Mammary epithelial cell (primary cell): ENCODE measurements at regions of chr14 and their contacts with region 1.

Region 1: GRCh38 chr14:55889124-55889523 is 229.1 kb upstream of the PELI2 start:
- DNase-seq: peak; percentile 90
- H3K4me3 ChIP-seq: no peak overlapping the region
- H3K27ac ChIP-seq: peak overlapping the region; percentile 34
- H3K4me1 ChIP-seq: peaks cover 25% of the 10 kb centered on the region
- H3K27me3 ChIP-seq: peaks cover 2% of the 10 kb centered on the region
- CTCF ChIP-seq: no peak

Region 2: GRCh38 chr14:55707365-55707804 is 181.7 kb before region 1 on chr14:
- CTCF ChIA-PET with region 1: no interaction called
- dilution Hi-C with region 1: no loop called
- in situ Hi-C with region 1: no loop called
- intact Hi-C with region 1: no loop called
- DNase-seq: peak; percentile 47
- H3K4me3 ChIP-seq: no peak overlapping the region
- H3K27ac ChIP-seq: no peak overlapping the region
- H3K4me1 ChIP-seq: peaks cover 18% of the 10 kb centered on the region
- H3K27me3 ChIP-seq: no peaks in the 10 kb centered on the region
- CTCF ChIP-seq: peak; percentile 69 to 73

Region 3: GRCh38 chr14:55864890-55865655 is 24.1 kb before region 1 on chr14:
- CTCF ChIA-PET with region 1: no interaction called
- dilution Hi-C with region 1: no loop called
- in situ Hi-C with region 1: no loop called
- intact Hi-C with region 1: loop called (anchors 2 kb)
- DNase-seq: no peak
- H3K4me3 ChIP-seq: no peak overlapping the region
- H3K27ac ChIP-seq: no peak overlapping the region
- H3K4me1 ChIP-seq: peaks cover 10% of the 10 kb centered on the region
- H3K27me3 ChIP-seq: no peaks in the 10 kb centered on the region
- CTCF ChIP-seq: peak in 1 of 2 donors; percentile 33

Region 4: DNA sequence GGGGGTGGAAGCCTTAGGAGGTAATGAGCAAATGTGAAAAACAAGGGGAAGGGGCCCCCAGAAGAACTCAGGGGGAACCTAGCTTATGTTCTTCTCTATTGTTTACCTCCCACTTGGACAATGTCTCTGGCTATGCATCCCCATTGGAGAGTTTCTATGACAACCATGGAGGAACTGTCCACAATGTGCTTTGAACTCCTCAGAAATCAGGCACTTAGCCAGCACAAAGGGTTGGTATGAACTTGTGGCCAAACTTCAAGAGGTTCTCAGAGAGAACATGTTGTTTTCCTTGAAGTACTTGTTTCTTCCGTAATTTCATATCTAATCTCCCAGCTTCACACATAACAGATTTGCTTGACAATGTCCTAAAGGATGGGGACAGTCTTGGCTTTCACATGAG is 26.3 kb after region 1 on chr14:
- CTCF ChIA-PET with region 1: no interaction called
- dilution Hi-C with region 1: no loop called
- in situ Hi-C with region 1: no loop called
- intact Hi-C with region 1: no loop called
- DNase-seq: no peak
- H3K4me3 ChIP-seq: no peak overlapping the region
- H3K27ac ChIP-seq: no peak overlapping the region
- H3K4me1 ChIP-seq: no peaks in the 10 kb centered on the region
- H3K27me3 ChIP-seq: no peaks in the 10 kb centered on the region
- CTCF ChIP-seq: no peak

Region 5: DNA sequence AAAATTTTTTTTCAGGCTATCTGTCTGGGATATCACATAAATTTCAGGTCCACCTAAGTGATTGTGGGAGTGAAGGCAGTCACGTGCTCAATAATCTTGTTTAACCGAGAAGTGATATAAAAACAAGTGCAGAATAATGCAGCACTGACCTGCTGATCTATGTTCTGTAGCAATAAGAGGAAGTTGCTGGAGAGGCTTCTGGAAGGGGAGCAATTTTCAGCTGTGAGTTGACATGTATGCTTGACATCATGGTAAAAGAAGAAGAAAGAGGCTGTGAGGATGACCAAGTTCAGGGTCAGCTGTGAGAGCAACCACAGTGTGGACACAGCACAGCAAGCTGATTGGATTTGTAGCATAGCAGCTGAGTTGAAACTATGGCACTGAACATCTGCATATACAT is 57.1 kb after region 1 on chr14:
- CTCF ChIA-PET with region 1: no interaction called
- dilution Hi-C with region 1: no loop called
- in situ Hi-C with region 1: no loop called
- intact Hi-C with region 1: no loop called
- DNase-seq: no peak
- H3K4me3 ChIP-seq: no peak overlapping the region
- H3K27ac ChIP-seq: no peak overlapping the region
- H3K4me1 ChIP-seq: no peaks in the 10 kb centered on the region
- H3K27me3 ChIP-seq: no peaks in the 10 kb centered on the region
- CTCF ChIP-seq: no peak